ENCODE measurements at regions of chr11 and their contacts with region 1.

Region 1: DNA sequence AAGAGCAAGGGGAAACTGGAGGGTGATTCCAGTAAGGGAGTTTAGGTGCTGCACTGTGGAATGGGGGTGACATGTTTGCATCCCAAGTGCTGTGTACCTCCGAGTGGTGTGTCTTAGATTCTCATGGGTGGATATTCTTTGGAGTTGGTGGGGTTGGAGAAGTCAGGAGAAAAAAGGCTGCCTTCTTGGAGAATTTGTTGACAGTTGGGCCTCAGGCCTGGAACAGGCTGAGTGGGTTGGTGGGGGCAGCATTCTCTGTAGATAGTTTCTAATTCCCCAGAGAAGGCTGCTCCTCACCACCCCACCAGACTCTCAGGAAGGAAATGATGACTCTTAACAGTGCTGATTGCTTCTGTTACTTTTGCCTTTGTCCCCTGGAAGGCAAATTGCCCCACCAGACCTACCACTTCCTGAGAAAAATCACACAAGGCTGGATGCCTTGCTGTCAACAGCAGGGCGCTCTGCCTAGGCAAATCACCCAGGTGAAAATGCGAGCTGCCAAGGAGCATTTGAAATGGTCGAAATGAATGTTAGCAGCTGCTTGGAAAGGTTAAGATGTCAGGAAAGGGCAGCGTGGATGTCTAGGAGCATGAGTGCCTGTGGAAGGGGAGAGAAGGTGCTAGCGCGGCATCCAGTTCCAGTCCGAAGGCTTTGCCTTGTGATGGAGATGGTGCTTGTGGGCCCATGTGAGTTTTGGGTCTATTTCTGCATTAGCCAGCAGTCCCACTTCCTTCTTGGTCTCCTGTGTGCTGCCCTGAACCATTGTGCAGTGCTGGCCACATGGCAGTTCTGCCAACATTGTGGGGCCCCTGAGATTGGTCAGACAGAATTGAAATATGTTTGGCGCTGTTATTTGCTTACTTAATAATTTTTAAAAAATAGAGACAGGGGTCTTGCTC is 29.7 kb upstream of the SORL1-AS1 start:
- DNase-seq: peak; percentile 52
- H3K4me3 Mint-ChIP-seq: peak overlapping the region; percentile 71
- H3K27ac Mint-ChIP-seq: peak overlapping the region; percentile 92
- H3K4me1 Mint-ChIP-seq: peaks cover 33% of the 10 kb centered on the region
- H3K27me3 Mint-ChIP-seq: no peaks in the 10 kb centered on the region

Region 2: DNA sequence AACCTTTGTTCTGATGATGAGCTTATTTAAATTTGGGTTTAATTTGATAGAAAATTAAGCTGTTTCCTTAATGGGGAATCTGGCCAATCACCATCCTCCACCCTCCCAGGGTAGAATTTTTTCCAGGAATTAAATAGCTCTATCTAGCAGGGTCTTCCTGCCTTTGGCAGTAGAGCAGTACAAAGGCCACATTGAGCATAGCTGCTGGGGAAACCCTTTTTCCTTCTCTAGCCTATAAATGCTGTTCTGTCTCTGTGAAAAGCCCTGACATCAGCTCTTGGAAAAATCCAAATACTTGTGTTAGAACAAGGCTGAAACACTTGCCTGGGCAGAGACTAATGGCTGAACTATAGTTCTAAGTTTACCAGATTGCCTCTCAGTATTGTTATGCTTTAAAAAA is 1091.2 kb before region 1 on chr11:
- intact Hi-C with region 1: no loop called
- DNase-seq: no peak
- H3K4me3 Mint-ChIP-seq: no peak overlapping the region
- H3K27ac Mint-ChIP-seq: no peak overlapping the region
- H3K4me1 Mint-ChIP-seq: no peaks in the 10 kb centered on the region
- H3K27me3 Mint-ChIP-seq: peaks cover 33% of the 10 kb centered on the region

Region 3: GRCh38 chr11:121494355-121495099 is 12.0 kb after region 1 on chr11:
- intact Hi-C with region 1: loop called (anchors 1 kb)
- DNase-seq: no peak
- H3K4me3 Mint-ChIP-seq: peak overlapping the region; percentile 6
- H3K27ac Mint-ChIP-seq: peak overlapping the region; percentile 40
- H3K4me1 Mint-ChIP-seq: peaks cover 32% of the 10 kb centered on the region
- H3K27me3 Mint-ChIP-seq: no peaks in the 10 kb centered on the region

Region 4: DNA sequence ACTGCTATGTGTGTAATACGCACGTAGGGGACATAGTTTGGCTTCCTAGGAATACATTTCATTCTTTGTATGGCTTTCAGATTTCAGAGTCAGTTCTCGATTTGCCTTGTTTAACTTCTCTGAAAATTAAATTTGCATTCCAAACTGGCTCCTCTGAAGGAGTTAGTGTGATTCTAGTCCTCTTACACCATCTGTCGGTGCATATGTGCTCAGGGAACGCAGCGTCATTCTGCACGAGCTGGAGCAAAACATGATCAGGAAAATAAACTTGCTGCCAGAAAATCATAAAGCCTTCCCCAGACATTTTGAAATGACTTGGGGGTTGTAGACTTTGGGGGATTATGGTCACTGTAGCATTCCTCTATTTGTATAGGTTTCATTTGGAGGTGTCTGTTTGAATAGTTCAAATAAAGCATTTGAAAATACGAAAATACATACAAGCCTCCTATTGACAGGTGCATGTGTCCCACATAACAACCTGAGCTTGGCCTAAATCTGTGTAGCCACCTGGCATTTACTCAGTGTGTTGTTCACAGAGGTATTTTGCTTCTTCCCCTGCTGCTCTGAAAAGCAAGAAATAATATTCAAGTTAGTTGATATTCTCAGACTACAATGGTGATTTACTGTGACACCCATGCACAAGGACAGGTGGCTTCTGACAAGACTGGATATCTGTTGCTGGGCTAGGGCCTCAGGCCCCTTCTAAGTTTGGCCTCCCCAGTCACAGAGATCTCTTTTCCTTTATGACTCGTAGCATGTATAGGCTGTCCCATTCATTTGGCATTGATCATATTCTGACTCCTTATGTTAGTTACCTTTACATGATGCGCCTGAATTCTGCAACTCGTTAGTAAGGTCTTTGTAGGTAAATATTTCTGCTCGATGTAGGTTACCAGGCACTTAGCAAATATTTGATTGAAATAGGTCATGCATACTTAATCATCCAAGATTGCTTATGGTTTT is 51.9 kb after region 1 on chr11:
- intact Hi-C with region 1: loop called (anchors 5 kb)
- DNase-seq: no peak
- H3K4me3 Mint-ChIP-seq: no peak overlapping the region
- H3K27ac Mint-ChIP-seq: no peak overlapping the region
- H3K4me1 Mint-ChIP-seq: peaks cover 18% of the 10 kb centered on the region
- H3K27me3 Mint-ChIP-seq: no peaks in the 10 kb centered on the region

Region 5: GRCh38 chr11:121671283-121672168 is 189.0 kb after region 1 on chr11:
- intact Hi-C with region 1: no loop called
- DNase-seq: no peak
- H3K4me3 Mint-ChIP-seq: no peak overlapping the region
- H3K27ac Mint-ChIP-seq: no peak overlapping the region
- H3K4me1 Mint-ChIP-seq: no peaks in the 10 kb centered on the region
- H3K27me3 Mint-ChIP-seq: peaks cover 3% of the 10 kb centered on the region